H1 (cell line): ENCODE measurements at regions of chr20 and their contacts with region 1.

Region 1: DNA sequence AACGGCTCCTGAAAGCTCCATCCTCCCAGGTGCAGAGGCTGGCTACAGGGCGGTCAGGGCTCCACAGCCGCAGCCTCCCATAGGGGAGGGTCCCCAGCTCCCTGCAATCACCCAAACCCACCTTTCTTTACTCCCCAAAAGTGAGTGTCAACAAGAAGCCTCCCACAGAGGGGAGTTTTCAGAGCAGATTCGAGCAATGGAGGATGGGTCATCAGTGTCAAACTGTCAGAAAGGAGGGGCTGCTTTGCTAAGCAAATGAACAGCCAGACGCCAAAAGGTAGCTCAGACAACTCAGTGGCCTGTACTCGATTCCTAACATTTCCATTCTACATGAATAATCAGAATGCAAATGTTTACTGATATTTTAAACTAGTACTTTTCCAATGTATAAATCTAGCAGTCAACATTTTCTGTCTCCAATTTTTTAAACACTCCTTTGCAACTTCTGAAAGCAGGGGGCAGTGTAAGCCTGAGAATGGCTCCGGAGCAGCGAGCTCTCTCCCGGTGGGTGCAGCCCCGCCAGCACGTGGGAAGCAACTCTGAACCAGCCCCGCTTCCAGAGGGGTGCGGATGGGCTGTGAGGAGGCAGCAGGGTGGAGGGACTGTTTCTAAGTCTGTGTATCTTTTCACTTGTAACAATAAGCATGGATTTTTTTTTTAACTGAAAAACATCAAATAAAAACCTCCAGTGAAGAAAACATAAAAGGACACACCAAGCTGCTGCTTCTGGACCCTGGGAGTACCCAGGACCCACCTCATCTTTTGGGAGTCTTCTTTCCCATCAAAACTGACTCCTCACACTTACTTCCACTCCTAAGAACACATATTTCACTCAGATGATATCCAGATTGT is 54.9 kb downstream of the TAF4 start:
- DNase-seq: peak; percentile 23 to 70
- H3K4me3 ChIP-seq: no peak overlapping the region
- H3K27ac ChIP-seq: no peak overlapping the region
- H3K4me1 ChIP-seq: peaks cover 0 to 2% (median 0%) of the 10 kb centered on the region in 4 experiments; a peak in 3 of 7 replicates
- H3K27me3 ChIP-seq: no peaks in the 10 kb centered on the region
- CTCF ChIP-seq: peak; percentile 43 to 77 (median 62)
- EP300 ChIP-seq: no peak
- POLR2A ChIP-seq: no peak
- RAD21 ChIP-seq: peak; percentile 92 to 93

Region 2: DNA sequence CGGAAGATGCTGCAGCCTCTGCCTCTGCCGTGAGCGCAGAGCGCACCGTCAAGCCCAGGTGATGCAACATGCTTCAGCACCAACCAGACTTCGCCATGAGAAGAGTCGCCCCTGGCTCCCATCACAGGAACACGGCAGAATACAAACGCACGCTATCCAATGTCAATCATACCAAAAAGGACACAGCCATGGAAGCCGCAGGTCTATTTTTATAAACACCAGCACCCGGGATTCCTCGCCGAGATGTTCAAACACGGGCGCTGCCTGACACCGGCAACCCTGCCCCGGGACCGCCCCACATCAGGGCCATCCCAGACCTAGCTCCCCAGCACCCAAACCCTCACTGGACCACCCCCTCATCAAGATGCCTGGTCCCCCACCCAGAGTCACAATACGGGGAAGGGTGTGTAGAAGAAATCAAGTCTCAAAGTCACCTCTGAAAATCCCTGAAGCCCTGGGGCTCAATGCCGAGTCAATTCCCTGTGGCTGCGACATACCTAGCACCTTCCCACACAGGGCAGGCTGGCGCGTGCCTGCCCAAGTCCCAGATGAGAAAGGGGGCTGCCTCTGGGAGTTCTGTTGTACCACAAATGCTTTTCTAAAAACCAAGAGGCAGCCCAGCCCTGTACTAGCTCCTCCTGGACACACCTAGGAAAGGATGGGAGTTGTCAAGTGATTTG is 37.0 kb after region 1 on chr20:
- CTCF ChIA-PET with region 1: interaction called, 12 read pairs
- POLR2A ChIA-PET with region 1: no interaction called
- DNase-seq: no peak
- H3K4me3 ChIP-seq: no peak overlapping the region
- H3K27ac ChIP-seq: no peak overlapping the region
- H3K4me1 ChIP-seq: peaks cover 0 to 16% (median 8%) of the 10 kb centered on the region in 4 experiments; a peak in 3 of 7 replicates
- H3K27me3 ChIP-seq: no peaks in the 10 kb centered on the region
- CTCF ChIP-seq: no peak
- EP300 ChIP-seq: no peak
- POLR2A ChIP-seq: no peak
- RAD21 ChIP-seq: no peak

Region 3: DNA sequence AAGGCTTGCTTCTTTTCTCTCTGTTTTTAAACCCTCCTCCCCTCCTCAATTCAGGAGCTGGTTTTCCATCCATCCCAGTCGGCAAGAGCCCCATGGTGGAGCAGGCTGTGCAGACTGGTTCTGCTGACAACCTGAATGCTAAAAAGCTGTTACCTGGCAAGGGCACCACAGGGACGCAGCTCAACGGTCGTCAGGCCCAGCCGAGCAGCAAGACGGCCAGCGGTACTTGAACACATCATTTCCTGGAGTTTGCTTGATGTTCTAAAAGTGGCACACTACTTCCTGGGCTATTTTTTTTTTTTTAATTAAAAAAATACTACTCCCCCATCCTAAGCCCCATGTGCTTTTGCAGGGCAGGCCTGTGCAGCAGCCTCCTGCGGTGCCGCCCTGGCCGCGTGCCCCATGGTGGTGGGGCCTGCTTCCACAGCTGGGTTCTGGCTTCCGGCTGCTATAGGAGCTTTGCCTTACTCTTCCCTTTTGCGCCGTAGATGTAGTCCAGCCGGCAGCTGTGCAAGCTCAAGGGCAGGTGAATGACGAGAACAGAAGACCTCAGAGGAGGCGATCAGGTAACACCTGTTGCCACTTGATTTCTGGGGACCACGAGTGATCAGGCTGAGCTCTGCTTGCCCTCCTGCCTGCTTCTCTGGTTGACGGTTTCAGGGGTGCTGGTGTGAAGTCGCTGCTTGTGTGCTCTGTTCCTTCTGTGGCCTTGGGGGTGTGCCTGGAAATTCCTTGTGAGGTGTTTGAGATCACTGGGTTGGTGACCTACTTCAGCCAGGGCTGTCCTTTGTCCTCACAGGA is 119.2 kb after region 1 on chr20:
- CTCF ChIA-PET with region 1: interaction called, 41 read pairs
- POLR2A ChIA-PET with region 1: interaction called, 4 read pairs
- DNase-seq: no peak
- H3K4me3 ChIP-seq: no peak overlapping the region
- H3K27ac ChIP-seq: no peak overlapping the region
- H3K4me1 ChIP-seq: no peaks in the 10 kb centered on the region
- H3K27me3 ChIP-seq: no peaks in the 10 kb centered on the region
- CTCF ChIP-seq: no peak
- EP300 ChIP-seq: no peak
- POLR2A ChIP-seq: no peak
- RAD21 ChIP-seq: no peak

Region 4: DNA sequence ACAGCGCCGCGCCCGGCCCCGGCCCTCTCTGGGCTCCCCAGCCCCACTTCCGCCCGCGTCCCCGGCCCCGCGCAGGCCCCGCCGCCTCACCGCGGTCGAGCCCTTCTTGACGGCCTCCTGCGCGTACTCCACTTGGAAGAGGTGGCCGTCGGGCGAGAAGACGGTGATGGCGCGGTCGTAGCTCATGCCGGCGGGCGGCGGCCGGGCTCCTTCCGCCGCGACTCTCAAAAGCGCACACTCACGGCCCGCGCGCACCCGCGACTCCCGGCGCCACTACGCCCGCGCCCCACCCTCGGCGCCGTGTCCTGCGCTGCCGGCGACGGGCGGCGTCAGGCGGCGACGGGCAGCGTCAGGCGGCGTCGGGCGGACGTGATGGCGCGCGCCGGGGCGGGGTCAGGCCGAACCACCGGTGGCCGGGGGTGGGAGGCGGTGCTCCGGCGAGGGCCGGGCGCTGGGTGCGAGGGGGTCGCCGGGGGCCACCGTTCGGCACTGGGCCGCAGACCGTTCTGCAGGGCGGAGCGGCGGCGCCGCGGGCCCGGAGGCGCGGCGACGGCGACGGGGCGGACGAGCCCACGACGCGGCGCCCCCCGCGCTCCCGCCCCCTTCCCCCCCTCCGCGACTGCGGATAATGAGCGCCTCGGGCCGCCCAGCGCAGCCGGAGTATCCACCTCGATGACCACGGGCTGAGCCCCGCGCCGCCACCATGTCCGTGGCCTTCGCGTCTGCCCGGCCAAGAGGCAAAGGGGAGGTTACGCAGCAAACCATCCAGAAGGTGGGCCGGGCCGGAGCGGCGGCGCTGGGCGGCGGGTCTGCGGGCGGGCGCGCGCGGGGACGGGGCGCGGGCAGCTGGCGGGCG is 132.6 kb after region 1 on chr20 and contains the starts of genes PSMA7 and SS18L1:
- CTCF ChIA-PET with region 1: interaction called, 12 read pairs
- POLR2A ChIA-PET with region 1: interaction called, 5 read pairs
- DNase-seq: peak in 1 of 2 experiments; percentile 87
- H3K4me3 ChIP-seq: peak within 1 kb of the TSS; percentile 63 to 81 (median 67)
- H3K27ac ChIP-seq: peak within 1 kb of the TSS; percentile 95; the same call in 1 of the 2 replicates
- H3K4me1 ChIP-seq: peaks cover 0 to 12% (median 4%) of the 10 kb centered on the region in 4 experiments; a peak in 6 of 7 replicates
- H3K27me3 ChIP-seq: no peaks in the 10 kb centered on the region
- CTCF ChIP-seq: no peak
- EP300 ChIP-seq: peak in 1 of 2 experiments; percentile 85; a peak in 1 of 3 replicates
- POLR2A ChIP-seq: peak in 1 of 2 experiments; percentile 70; a peak in 1 of 3 replicates
- RAD21 ChIP-seq: no peak
- total RNA-seq, gene PSMA7: 339 and 361 TPM in 2 replicates
- total RNA-seq, gene SS18L1: 22.4 and 28.4 TPM in 2 replicates